Left ventricle myocardium inferior (tissue), 1 donor: ENCODE measurements at regions of chr12 and their contacts with region 1.

Region 1: DNA sequence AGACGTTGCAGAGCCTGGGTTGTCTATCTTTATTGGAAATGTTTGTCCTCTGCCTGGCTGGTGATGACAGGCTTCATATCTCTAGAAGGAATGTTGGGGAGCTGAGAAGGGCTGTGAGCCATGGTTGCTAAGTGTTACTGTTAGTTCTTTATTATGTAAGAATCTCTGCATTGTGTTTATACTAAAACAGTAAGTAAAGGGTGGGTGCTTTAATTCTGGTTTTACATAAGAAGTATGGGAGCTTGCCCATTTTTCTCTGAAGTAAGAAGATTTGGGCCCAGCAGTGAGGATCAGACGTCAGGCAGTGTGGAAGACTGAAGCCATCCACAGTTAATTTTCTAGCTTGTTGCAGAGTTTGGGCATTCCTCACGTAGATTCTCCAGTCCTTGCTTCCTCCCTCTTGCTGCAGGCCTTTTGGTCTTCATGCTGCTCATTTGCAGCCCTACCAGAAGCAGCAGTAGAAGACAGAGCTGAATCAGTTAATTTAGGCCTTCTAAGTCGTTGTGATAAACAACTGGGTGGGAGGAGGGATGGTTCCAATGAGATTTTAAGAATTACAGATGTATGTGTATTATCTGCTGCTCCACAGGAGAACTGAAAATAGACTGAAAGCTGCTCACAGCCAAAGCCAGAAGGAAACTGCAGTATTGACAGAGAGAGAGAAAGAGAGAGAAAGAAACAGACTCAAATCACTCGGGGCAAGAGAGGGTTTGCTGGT is 21.4 kb downstream of the WNT5B start:
- DNase-seq: no peak
- H3K4me3 ChIP-seq: no peak overlapping the region
- H3K27ac ChIP-seq: peak overlapping the region; percentile 81
- H3K4me1 ChIP-seq: peaks cover 37% of the 10 kb centered on the region
- H3K27me3 ChIP-seq: no peaks in the 10 kb centered on the region
- CTCF ChIP-seq: no peak

Region 2: DNA sequence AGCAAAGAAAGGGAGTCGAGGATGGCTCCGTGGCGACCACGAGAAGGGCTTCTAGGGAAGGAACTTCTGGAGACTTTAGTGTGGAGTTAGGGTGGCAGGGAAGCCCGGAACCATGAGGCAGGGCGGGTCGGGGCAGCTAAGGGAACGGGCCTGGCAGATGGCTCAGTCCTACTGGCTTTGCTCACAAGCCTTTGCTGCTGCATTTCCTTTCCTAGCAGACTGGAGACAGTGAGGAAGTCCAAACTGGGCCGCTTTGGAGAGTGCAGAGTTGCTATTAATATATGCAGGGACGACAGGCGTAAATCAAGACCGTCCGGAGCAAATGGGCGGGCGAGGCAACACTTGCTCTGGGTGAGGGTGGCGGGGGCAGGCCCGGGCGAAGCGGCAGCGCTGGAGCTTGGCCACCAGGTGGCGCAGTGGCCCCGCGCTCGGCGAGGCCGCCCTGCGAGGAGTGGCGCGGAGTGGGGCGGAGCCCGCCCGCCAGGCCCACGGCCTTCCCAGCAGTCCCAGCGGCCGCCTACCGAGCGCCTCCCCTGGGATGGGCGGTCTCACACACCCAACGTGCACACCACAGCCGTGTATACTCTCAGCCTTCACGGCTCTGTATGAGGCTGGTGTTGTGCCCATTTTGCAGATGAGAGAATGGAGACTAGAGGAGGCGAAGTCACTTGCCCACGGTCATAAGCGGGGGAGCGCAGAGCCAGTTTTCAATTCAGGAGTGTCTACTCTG is 145.5 kb after region 1 on chr12:
- intact Hi-C with region 1: loop called (anchors 2 kb)
- DNase-seq: peak; percentile 94
- H3K4me3 ChIP-seq: peak overlapping the region; percentile 80
- H3K27ac ChIP-seq: peak overlapping the region; percentile 89
- H3K4me1 ChIP-seq: peaks cover 58% of the 10 kb centered on the region
- H3K27me3 ChIP-seq: no peaks in the 10 kb centered on the region
- CTCF ChIP-seq: peak; percentile 98